Cardiac septum (tissue), 1 donor: ENCODE measurements at regions of chr16 and their contacts with region 1.

Region 1: GRCh38 chr16:58025351-58026138 is at the start of gene MMP15:
- DNase-seq: no peak
- total RNA-seq, gene MMP15: 53.5 TPM

Region 2: GRCh38 chr16:58127033-58127556 is 101.5 kb after region 1 on chr16:
- intact Hi-C with region 1: loop called (anchors 1 kb)
- DNase-seq: no peak

Region 3: DNA sequence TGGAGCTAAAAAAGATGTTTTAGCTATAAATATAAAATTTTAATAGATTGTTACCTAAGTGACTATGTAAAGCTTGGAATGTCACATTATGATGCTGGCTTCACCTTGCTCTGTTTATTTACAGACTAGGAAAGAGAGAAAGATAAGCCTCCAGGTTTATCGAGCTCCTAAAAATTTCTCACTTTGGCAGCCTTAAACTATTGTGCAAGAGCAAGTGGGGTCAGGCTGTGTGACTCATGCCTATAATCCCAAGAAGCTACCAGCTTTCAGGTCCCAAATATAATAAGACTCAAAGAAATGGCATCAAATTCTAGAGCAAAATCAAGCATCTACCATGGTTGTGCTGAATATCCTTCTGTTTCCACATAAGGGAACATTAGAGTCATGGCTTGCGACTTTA is 303.6 kb after region 1 on chr16:
- intact Hi-C with region 1: loop called (anchors 10 kb)
- DNase-seq: no peak